Endothelial cell of umbilical vein (primary cell): ENCODE measurements at regions of chr11 and their contacts with region 1.

Region 1: DNA sequence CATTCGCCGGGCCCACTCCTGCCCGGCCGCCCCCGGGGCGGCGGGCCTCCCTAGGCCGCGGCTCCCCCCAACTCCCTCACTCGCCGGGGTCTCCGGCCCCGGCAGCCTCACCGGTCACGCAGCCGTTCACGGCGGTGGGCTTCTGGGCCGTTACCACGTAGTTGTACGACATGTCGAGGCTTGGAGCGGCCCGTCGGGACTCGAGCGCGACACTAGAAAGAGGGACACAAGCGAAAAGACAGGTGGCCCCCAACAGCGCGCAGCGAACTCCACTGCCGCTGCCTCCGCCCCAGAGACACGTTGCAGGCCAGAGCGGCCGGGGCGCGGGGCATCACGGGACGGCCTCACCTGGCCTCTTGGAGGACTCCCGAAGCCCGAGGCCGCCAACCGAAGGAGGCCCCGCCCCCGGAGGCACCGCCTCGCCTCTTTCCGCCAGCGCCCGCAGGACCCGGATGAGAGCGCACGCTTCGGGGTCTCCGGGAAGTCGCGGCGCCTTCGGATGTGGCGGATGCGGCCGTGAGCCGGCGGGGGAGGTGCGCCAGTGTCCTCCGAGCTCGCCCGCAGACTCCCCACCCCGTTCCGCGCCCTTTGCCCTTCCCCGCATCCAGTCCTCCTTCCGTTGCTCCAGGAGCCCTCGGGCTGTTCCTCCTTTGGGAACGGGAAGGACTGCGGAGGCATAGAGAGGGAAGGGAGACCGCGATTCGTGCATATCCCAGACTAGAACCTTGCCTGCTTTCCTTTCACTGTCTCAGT is at the starts of genes DDB1 and TKFC:
- DNase-seq: peak; percentile 94
- H3K4me3 ChIP-seq: peak within 1 kb of the TSS; percentile 67 to 85 (median 76)
- H3K27ac ChIP-seq: peak within 1 kb of the TSS; percentile 40
- H3K4me1 ChIP-seq: peaks cover 10% of the 10 kb centered on the region
- H3K27me3 ChIP-seq: no peaks in the 10 kb centered on the region
- CTCF ChIP-seq: no peak
- POLR2A ChIP-seq: peak; percentile 98
- total RNA-seq, gene DDB1: 229 TPM in 2 replicates
- total RNA-seq, gene TKFC: 28.6 and 30.8 TPM in 2 replicates

Region 2: DNA sequence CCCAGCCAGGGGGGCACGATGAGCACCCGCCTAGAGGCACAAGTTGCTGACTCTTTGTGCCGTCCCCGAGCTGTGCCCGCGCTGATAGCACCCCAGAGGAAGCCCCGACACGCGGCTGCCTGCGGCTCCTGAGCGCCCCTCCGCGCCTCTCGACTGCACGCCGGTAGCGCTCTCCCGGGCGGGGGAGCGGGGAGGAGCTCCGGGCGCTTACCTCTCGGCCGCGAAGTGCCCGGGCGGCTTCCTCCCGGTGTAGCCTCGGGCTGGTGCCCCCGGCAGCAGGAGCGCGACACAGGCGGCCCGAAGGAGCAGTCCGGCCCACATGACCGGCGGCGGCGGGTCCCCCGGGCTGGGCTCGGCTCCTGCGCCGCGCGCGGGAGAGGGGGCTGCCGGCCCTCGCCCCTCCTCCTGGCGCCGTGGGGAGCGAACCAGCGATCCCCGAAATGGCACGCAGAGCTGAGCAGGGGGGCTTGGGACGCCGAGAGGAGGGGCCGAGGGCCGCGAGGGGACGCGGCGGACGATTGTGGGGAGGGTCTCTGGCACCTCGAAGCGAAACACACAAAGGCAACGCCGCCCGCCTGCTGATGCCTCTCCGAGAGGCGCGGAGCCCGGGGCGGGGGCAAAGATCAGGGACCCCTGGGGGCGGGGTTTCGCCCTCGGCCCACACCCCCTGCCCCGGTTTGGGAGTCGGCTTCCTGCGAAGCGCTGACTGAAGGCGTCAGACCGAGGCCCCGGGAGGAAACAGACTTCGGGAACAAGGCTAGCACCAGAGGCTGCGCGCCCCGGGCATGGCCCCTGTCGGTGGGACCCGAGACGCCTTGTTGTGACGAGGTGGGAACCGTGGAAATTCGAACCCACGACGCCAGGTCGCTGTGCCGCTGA is 38.0 kb before region 1 on chr11 and contains the start of gene VWCE:
- CTCF ChIA-PET with region 1: no interaction called
- POLR2A ChIA-PET with region 1: no interaction called
- dilution Hi-C with region 1: no loop called
- intact Hi-C with region 1: loop called (anchors 2 kb)
- DNase-seq: peak; percentile 56
- H3K4me3 ChIP-seq: peak within 1 kb of the TSS; percentile 8 to 48 (median 45)
- H3K27ac ChIP-seq: no peak within 1 kb of the TSS
- H3K4me1 ChIP-seq: peaks cover 41% of the 10 kb centered on the region
- H3K27me3 ChIP-seq: peaks cover 5 to 9% of the 10 kb centered on the region in 2 experiments
- CTCF ChIP-seq: peak; percentile 10 to 29
- POLR2A ChIP-seq: no peak
- total RNA-seq, gene VWCE: 14.4 and 14.8 TPM in 2 replicates

Region 3: GRCh38 chr11:61361686-61362541 is 28.9 kb after region 1 on chr11 and contains the starts of genes CYB561A3 and TMEM138:
- CTCF ChIA-PET with region 1: interaction called, 49 read pairs
- POLR2A ChIA-PET with region 1: interaction called, 11 read pairs
- dilution Hi-C with region 1: no loop called
- intact Hi-C with region 1: loop called (anchors 1 kb)
- DNase-seq: peak; percentile 94
- H3K4me3 ChIP-seq: peak within 1 kb of the TSS; percentile 53 to 83 (median 76)
- H3K27ac ChIP-seq: peak within 1 kb of the TSS; percentile 63
- H3K4me1 ChIP-seq: peaks cover 18% of the 10 kb centered on the region
- H3K27me3 ChIP-seq: no peaks in the 10 kb centered on the region
- CTCF ChIP-seq: no peak
- POLR2A ChIP-seq: peak; percentile 97
- total RNA-seq, gene CYB561A3: 41.6 and 44.0 TPM in 2 replicates
- total RNA-seq, gene TMEM138: 37.9 and 43.6 TPM in 2 replicates

Region 4: DNA sequence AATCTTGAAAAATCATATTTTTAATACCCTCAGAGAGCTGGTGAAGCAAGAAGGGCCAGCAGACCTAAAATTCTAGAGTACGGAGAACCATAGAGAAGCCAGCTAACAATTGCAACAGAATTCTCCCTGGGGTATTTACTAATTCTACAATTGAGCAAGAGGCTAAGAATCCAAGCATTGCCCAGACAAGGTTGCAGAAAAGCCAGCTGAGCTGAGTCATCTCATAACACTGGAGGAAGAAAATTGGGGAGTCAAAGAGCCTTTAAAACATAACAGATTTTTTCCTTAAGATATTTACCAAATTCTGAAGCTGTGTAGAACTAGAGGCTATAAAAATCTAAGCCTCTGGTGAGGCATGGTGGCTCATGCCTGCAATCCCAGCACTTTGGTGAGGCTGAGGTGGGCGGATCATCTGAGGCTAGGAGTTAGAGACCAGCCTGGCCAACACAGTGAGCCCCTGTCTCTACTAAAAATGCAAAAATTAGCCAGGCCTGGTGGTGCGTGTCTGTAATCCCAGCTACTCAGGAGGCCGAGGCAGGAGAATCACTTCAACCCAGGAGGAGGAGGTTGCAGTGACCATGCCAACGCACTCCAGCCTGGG is 45.8 kb after region 1 on chr11:
- CTCF ChIA-PET with region 1: interaction called, 345 read pairs
- POLR2A ChIA-PET with region 1: no interaction called
- dilution Hi-C with region 1: no loop called
- intact Hi-C with region 1: no loop called
- DNase-seq: no peak
- H3K4me3 ChIP-seq: no peak overlapping the region
- H3K27ac ChIP-seq: no peak overlapping the region
- H3K4me1 ChIP-seq: no peaks in the 10 kb centered on the region
- H3K27me3 ChIP-seq: no peaks in the 10 kb centered on the region
- CTCF ChIP-seq: no peak
- POLR2A ChIP-seq: no peak